A549 (cell line): ENCODE measurements at regions of chr4 and their contacts with region 1.

Region 1: GRCh38 chr4:186037692-186038658 is 31.0 kb upstream of the TLR3 start:
- DNase-seq: peak; percentile 26 to 77
- ATAC-seq: peak; percentile 83 to 87; a peak in 4 of 6 replicates
- H3K4me3 ChIP-seq: no peak overlapping the region
- H3K27ac ChIP-seq: no peak overlapping the region
- H3K4me1 ChIP-seq: no peaks in the 10 kb centered on the region
- CTCF ChIP-seq: peak; percentile 67
- EP300 ChIP-seq: no peak
- POLR2A ChIP-seq: no peak
- RAD21 ChIP-seq: peak; percentile 78 to 82

Region 2: DNA sequence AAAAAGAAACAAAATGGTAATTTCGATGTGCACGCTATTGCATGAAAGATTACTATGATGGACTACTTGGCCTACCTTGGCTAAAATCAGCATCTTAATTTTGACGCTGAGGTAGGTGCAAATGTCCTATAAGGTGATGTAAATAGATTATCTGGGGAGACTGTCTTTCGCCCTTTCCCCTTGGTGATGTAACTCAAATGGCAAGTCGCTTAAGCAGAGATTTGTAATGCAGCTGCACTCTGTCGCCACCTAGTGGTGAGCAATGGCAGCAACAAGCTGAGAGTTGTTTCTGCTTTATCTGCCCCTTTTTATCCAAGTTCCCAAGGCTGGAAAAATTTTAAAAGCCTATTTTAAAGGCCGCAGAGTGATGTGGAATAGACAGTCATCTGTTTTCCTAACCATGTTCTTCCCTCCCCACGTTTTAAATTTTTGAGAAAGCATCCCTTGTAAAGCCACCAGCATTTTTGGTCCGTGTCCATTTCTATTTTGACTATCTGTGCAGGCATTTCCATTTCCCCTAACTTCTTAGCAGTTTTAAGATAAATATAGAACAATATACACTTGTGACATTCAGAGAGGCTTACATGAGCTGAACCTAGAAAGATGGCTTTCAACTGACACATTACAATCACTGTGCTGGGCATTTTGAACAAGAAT is 440.3 kb before region 1 on chr4:
- CTCF ChIA-PET with region 1: interaction called, 12 read pairs
- POLR2A ChIA-PET with region 1: no interaction called
- DNase-seq: peak; percentile 35 to 69
- ATAC-seq: peak; percentile 68 to 77
- H3K4me3 ChIP-seq: no peak overlapping the region
- H3K27ac ChIP-seq: no peak overlapping the region
- H3K4me1 ChIP-seq: no peaks in the 10 kb centered on the region
- CTCF ChIP-seq: peak; percentile 80
- EP300 ChIP-seq: no peak
- POLR2A ChIP-seq: no peak
- RAD21 ChIP-seq: peak; percentile 74 to 81

Region 3: DNA sequence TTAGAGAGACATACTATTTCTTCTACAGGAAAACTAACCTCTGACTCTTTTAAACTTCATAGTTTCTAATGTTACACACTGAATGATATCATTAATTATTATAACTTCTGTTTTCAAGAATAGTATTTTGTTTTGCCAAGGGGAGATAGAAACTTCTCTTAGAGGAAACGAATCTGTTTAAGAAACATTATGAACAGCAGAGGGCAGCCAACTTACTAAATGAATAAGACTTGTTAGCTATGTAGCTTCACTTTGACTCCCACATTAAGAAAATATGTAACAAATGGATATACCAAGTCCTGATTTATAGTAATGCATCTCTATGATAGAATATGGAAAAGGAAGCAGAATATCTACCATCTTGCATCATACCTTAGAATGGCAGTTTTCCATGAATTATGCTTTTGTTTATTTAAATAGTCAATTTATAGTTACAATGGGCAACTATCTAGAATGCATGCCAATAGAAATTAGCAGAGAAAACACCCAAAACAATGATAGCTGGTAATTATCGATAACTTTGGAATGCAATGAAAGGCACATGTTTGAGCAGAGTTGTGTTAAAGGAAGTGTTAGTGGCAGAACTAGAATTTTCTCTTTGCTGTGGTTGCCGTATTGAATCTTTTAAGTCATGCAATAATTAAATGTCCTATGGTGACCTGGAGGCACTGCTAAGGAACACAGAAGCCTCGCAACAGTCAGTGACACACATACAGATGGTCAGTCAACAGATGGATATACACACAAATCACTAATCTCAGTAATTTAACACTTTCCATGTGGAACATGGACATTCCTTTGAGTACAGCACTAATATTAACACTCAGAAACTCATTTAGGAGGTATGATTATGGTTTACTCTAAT is 396.9 kb before region 1 on chr4:
- CTCF ChIA-PET with region 1: interaction called, 64 read pairs
- POLR2A ChIA-PET with region 1: no interaction called
- DNase-seq: peak; percentile 15 to 70
- ATAC-seq: no peak
- H3K4me3 ChIP-seq: no peak overlapping the region
- H3K27ac ChIP-seq: no peak overlapping the region
- H3K4me1 ChIP-seq: no peaks in the 10 kb centered on the region
- CTCF ChIP-seq: peak; percentile 56
- EP300 ChIP-seq: no peak
- POLR2A ChIP-seq: no peak
- RAD21 ChIP-seq: peak; percentile 59

Region 4: DNA sequence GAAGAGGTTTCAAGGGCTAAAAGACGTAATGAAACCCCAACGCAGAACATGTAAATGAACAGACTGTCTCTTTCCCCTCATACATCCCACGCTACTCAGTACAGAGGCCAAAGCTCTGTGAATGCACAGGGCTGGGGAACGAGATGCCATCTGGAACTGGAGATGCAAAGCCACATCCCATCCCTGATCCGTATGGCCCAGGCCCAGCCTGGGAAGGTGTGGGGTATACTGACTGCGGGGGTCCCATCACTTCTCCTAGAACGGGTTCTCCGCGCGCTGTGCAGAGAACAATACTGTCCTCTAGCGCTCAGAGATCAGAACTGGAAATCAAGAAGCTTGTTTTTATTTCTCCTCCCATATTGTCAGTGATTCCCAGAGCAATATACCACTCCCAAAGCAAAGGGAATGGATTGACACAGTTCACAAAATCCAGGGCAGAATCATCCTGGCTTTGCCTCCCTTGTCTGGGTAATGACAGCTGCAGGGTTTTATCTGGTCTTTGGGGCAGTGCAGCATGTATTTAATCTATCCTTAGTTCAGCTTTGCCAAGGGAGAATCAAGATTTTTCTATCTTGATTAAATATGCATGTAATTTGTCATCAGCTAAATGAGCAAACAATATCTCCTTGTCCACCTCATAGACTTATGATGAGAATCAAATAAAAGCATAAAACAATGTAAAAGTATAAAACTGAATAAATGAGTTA is 16.4 kb before region 1 on chr4:
- CTCF ChIA-PET with region 1: interaction called, 28 read pairs
- POLR2A ChIA-PET with region 1: no interaction called
- DNase-seq: peak; percentile 14 to 21
- ATAC-seq: peak; percentile 62 to 82
- H3K4me3 ChIP-seq: no peak overlapping the region
- H3K27ac ChIP-seq: no peak overlapping the region
- H3K4me1 ChIP-seq: no peaks in the 10 kb centered on the region
- CTCF ChIP-seq: peak; percentile 72
- EP300 ChIP-seq: no peak
- POLR2A ChIP-seq: no peak
- RAD21 ChIP-seq: peak; percentile 85

Region 5: DNA sequence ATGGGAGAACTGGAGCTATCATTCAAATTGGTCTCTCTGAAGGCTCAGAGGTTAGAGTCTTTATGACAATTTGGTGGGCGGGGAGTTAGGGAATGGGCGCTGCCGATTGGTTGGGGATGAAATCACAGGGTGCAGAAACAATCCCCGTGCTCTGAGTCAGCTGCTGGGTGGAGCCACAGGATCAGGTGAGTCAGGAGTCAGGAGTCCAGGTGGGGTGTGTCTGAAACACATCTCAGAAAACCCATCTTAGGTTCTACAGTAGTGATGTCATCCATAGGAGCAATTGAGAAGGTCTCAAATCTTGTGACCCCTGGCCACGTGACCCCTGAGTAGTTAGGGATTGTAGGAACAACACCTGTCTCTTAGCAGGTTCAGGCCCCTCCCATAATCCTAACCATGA is 10.6 kb before region 1 on chr4:
- CTCF ChIA-PET with region 1: interaction called, 22 read pairs
- POLR2A ChIA-PET with region 1: no interaction called
- DNase-seq: no peak
- ATAC-seq: no peak
- H3K4me3 ChIP-seq: no peak overlapping the region
- H3K27ac ChIP-seq: no peak overlapping the region
- H3K4me1 ChIP-seq: no peaks in the 10 kb centered on the region
- CTCF ChIP-seq: no peak
- EP300 ChIP-seq: no peak
- POLR2A ChIP-seq: no peak
- RAD21 ChIP-seq: no peak

Region 6: DNA sequence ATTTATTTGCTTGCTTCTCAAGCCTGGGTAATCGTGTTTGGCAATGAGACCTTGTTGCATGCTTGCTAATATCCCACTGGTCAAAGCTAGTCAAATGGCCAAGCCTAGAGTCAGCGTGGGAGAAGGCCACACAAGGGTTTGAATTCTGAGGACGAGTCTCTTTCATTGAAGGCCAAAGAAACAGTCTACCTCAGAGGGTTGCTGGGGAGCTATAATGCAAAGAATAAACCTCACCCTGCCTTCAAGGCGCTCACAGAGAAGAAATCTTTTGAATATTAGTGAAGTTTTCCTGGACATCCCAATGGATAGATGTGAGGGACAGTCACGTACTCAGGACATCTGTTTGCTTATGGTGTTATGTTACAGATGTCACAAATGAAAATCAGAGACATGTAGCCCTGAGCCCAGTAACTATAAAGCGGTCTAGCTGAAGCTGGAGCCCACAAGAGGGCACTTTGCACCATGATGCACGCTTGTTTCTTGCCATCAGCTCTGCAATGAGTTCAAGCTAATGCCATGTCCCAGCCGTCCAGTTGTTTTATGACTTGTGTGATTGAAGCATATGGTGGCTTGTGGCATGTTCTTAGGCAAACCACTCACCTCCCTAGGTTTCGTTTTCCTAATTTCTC is 29.9 kb after region 1 on chr4:
- CTCF ChIA-PET with region 1: interaction called, 13 read pairs
- POLR2A ChIA-PET with region 1: no interaction called
- DNase-seq: peak in 1 of 2 experiments; percentile 70
- ATAC-seq: peak; percentile 95 to 98
- H3K4me3 ChIP-seq: peak overlapping the region; percentile 44; the same call in 2 of the 3 replicates
- H3K27ac ChIP-seq: no peak overlapping the region
- H3K4me1 ChIP-seq: no peaks in the 10 kb centered on the region
- CTCF ChIP-seq: peak; percentile 51
- EP300 ChIP-seq: no peak
- POLR2A ChIP-seq: no peak
- RAD21 ChIP-seq: peak; percentile 55 to 60

Region 7: GRCh38 chr4:186137196-186137794 is 99.3 kb after region 1 on chr4:
- CTCF ChIA-PET with region 1: interaction called, 11 read pairs
- POLR2A ChIA-PET with region 1: no interaction called
- DNase-seq: peak; percentile 11
- ATAC-seq: peak in 1 of 2 experiments; percentile 48; a peak in 1 of 6 replicates
- H3K4me3 ChIP-seq: no peak overlapping the region
- H3K27ac ChIP-seq: no peak overlapping the region
- H3K4me1 ChIP-seq: no peaks in the 10 kb centered on the region
- CTCF ChIP-seq: peak; percentile 67
- EP300 ChIP-seq: no peak
- POLR2A ChIP-seq: no peak
- RAD21 ChIP-seq: peak; percentile 58 to 66

Region 8: DNA sequence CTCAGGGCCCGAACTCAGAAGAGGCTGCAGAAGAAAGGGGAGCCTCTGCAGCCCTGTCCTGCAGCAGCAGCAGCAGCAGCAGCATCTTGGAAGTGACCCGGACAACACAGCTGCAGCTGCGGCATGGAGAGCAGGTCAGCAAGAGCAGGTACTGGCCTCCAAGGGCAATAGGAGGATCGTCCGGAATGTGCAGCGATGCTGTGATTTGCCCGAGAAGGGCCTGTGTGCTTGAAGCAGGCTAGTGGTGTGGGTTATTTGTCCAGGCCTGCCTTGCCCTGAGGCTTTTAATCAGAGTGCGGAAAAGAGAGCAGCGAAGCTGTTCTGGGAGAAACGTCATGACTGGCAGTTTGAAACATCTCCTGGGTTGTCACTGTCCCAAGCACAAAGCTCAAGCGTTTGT is 354.1 kb after region 1 on chr4:
- CTCF ChIA-PET with region 1: no interaction called
- POLR2A ChIA-PET with region 1: no interaction called
- DNase-seq: no peak
- ATAC-seq: no peak
- H3K4me3 ChIP-seq: no peak overlapping the region
- H3K27ac ChIP-seq: no peak overlapping the region
- H3K4me1 ChIP-seq: no peaks in the 10 kb centered on the region
- CTCF ChIP-seq: no peak
- EP300 ChIP-seq: no peak
- POLR2A ChIP-seq: no peak
- RAD21 ChIP-seq: no peak